B cell (primary cell): ENCODE measurements at regions of chr19 and their contacts with region 1.

Region 1: DNA sequence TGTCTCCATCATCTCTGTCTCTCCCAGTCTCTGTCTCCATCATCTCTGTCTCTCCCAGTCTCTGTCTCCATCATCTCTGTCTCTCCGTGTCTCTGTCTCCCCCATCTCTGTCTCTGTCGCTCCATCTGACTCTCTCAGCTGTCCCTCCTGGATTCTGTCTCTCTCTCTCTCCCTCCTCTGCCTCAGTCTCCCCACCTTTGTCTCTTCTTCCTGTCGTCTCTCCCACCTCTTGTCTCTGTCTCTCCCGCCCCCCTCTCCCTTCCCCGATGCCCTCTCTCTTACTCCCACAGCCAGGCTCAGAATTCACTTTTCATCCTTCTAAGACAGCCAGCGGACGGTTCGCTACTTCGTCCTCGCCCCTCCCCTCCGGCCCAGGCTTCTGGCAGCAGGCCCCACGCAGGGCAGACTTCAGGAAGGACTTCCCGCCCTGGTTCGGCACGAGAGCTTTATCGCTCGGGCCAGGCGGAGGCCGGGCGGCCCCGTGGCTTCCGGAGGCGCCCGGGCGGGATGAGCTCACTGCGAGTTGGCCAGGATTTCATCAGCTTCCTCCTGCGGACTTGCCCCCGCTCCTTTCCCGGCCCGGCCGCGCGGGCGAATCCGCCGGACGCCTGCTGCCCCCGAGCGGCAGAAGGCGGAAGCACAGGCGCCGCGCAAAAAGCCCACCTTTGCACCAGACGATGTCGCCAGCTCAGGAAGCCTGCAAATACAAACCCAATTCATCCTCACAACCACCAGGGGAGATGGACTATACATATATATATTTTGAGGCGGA is 12.4 kb upstream of the CCDC9 start:
- DNase-seq: peak; percentile 93
- ATAC-seq: peak; percentile 71
- H3K4me3 ChIP-seq: peak overlapping the region in 4 of 5 experiments; percentile 12 to 27 (median 14)
- H3K4me3 Mint-ChIP-seq: peak overlapping the region; percentile 64
- H3K27ac ChIP-seq: no peak overlapping the region
- H3K27ac Mint-ChIP-seq: peak overlapping the region; percentile 68
- H3K4me1 ChIP-seq: peaks cover 50% of the 10 kb centered on the region in 2 donors
- H3K4me1 Mint-ChIP-seq: peaks cover 32% of the 10 kb centered on the region
- H3K27me3 ChIP-seq: peaks cover 0 to 55% (median 23%) of the 10 kb centered on the region in 4 experiments
- H3K27me3 Mint-ChIP-seq: peaks cover 17% of the 10 kb centered on the region
- CTCF ChIP-seq: peak; percentile 98

Region 2: GRCh38 chr19:47075179-47075810 is 168.7 kb before region 1 on chr19:
- CTCF ChIA-PET with region 1: interaction called, 14 read pairs
- POLR2A ChIA-PET with region 1: no interaction called
- intact Hi-C with region 1: no loop called
- DNase-seq: no peak
- ATAC-seq: no peak
- H3K4me3 ChIP-seq: no peak overlapping the region
- H3K4me3 Mint-ChIP-seq: no peak overlapping the region
- H3K27ac ChIP-seq: no peak overlapping the region
- H3K27ac Mint-ChIP-seq: peak overlapping the region; percentile 54
- H3K4me1 ChIP-seq: no peaks in the 10 kb centered on the region
- H3K4me1 Mint-ChIP-seq: peaks cover 4% of the 10 kb centered on the region
- H3K27me3 ChIP-seq: no peaks in the 10 kb centered on the region
- H3K27me3 Mint-ChIP-seq: no peaks in the 10 kb centered on the region
- CTCF ChIP-seq: no peak

Region 3: DNA sequence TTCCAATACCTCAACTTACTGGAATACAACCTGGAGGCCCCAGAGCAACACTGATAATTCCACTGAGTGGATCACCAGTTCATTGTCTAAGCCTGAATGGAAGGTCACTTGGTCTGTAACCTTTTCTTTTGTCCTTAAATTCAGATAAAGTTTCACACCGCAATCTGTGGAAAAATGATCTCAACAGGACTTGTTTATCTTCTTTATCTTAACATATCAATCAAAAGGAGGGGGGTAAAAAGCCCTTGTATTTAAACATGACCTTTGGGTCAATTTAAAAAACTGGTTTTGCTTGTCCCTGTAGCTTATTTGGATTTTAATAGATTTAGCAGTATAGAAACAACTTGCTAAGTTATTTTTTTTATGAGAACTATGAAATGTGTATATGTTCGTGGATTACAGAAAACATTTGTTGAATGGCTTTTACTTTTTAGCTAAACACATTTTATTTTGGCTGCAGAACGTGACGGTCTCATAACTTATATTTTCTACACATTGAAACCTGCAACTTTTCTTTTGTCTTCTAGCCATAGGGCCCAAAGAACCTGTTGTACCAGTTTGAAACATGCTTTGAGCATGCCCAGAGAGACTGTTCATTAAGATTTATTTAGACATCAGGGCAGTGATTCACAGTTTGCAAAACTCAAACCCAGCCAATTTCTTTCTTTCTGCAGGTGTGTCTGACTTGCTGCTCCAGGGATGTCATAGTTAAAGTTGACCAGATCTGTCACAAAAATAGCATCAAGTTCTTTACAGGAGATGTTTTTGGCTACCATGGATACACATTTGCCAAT is 91.5 kb before region 1 on chr19:
- CTCF ChIA-PET with region 1: interaction called, 78 read pairs
- POLR2A ChIA-PET with region 1: interaction called, 7 read pairs
- intact Hi-C with region 1: loop called (anchors 1 kb)
- DNase-seq: no peak
- ATAC-seq: no peak
- H3K4me3 ChIP-seq: no peak overlapping the region
- H3K4me3 Mint-ChIP-seq: no peak overlapping the region
- H3K27ac ChIP-seq: no peak overlapping the region
- H3K27ac Mint-ChIP-seq: no peak overlapping the region
- H3K4me1 ChIP-seq: peaks cover 11 to 16% of the 10 kb centered on the region in 2 donors
- H3K4me1 Mint-ChIP-seq: peaks cover 13% of the 10 kb centered on the region
- H3K27me3 ChIP-seq: no peaks in the 10 kb centered on the region
- H3K27me3 Mint-ChIP-seq: no peaks in the 10 kb centered on the region
- CTCF ChIP-seq: no peak

Region 4: GRCh38 chr19:47225746-47226425 is 18.1 kb before region 1 on chr19:
- CTCF ChIA-PET with region 1: interaction called, 99 read pairs
- POLR2A ChIA-PET with region 1: interaction called, 31 read pairs
- intact Hi-C with region 1: loop called (anchors 1 kb)
- DNase-seq: peak; percentile 93
- ATAC-seq: peak; percentile 62
- H3K4me3 ChIP-seq: peak overlapping the region in 4 of 5 experiments; percentile 42 to 95 (median 56)
- H3K4me3 Mint-ChIP-seq: peak overlapping the region; percentile 90
- H3K27ac ChIP-seq: peak overlapping the region; percentile 82 to 93
- H3K27ac Mint-ChIP-seq: peak overlapping the region; percentile 95
- H3K4me1 ChIP-seq: peaks cover 41 to 46% of the 10 kb centered on the region in 2 donors
- H3K4me1 Mint-ChIP-seq: peaks cover 15% of the 10 kb centered on the region
- H3K27me3 ChIP-seq: peaks cover 0 to 31% (median 1%) of the 10 kb centered on the region in 4 experiments
- H3K27me3 Mint-ChIP-seq: no peaks in the 10 kb centered on the region
- CTCF ChIP-seq: peak; percentile 50

Region 5: DNA sequence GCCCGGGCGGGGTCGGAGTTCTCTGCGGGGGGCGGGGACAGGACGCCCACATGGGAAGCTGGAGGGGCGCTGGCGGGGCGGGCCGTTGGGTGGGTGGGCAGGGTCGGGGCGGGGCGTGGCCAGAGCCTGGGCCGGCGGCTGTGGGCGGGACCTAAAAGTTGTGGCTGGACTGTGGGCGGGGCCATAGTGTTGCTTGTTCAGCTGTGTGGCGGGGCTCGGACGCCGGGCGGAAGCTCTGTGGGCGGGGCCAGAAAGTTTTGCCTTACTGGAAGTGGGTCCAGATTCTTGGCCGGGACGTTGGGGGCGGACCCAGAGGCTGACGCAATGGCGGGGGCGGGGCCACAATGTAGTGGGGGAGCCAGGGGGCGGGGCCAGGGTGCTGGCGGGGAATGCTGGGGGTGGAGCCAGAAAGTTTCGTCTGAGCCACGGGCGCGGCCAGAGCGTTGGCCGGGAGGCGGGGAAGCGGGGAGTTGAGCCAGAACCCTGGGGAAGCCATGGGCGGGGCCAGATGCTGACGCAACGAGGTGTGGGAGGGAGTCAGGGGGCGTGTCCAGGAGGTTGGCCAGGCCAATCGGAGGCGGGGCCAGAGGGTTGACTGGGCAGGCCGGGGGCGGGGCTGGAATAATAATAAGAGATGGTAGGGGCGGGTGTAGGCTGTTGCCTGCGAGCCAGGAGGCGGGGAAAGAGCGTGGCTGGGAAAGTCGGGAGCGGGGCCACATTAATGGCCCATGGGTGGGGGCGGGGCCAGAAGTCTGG is 12.9 kb after region 1 on chr19:
- CTCF ChIA-PET with region 1: interaction called, 66 read pairs
- POLR2A ChIA-PET with region 1: interaction called, 19 read pairs
- intact Hi-C with region 1: loop called (anchors 1 kb)
- DNase-seq: peak; percentile 98
- ATAC-seq: peak; percentile 77
- H3K4me3 ChIP-seq: peak overlapping the region; percentile 38 to 71 (median 62)
- H3K4me3 Mint-ChIP-seq: peak overlapping the region; percentile 92
- H3K27ac ChIP-seq: peak overlapping the region; percentile 73 to 94
- H3K27ac Mint-ChIP-seq: peak overlapping the region; percentile 95
- H3K4me1 ChIP-seq: peaks cover 14 to 20% of the 10 kb centered on the region in 2 donors
- H3K4me1 Mint-ChIP-seq: peaks cover 40% of the 10 kb centered on the region
- H3K27me3 ChIP-seq: no peaks in the 10 kb centered on the region
- H3K27me3 Mint-ChIP-seq: no peaks in the 10 kb centered on the region
- CTCF ChIP-seq: no peak

Region 6: GRCh38 chr19:47330466-47330869 is 86.5 kb after region 1 on chr19:
- CTCF ChIA-PET with region 1: no interaction called
- POLR2A ChIA-PET with region 1: no interaction called
- intact Hi-C with region 1: no loop called
- DNase-seq: no peak
- ATAC-seq: no peak
- H3K4me3 ChIP-seq: no peak overlapping the region
- H3K4me3 Mint-ChIP-seq: no peak overlapping the region
- H3K27ac ChIP-seq: no peak overlapping the region
- H3K27ac Mint-ChIP-seq: no peak overlapping the region
- H3K4me1 ChIP-seq: no peaks in the 10 kb centered on the region
- H3K4me1 Mint-ChIP-seq: no peaks in the 10 kb centered on the region
- H3K27me3 ChIP-seq: peaks cover 0 to 2% (median under 1%) of the 10 kb centered on the region in 4 experiments
- H3K27me3 Mint-ChIP-seq: peaks cover 15% of the 10 kb centered on the region
- CTCF ChIP-seq: no peak